GM13976 (cell line): ENCODE measurements at regions of chr11 and their contacts with region 1.

Region 1: DNA sequence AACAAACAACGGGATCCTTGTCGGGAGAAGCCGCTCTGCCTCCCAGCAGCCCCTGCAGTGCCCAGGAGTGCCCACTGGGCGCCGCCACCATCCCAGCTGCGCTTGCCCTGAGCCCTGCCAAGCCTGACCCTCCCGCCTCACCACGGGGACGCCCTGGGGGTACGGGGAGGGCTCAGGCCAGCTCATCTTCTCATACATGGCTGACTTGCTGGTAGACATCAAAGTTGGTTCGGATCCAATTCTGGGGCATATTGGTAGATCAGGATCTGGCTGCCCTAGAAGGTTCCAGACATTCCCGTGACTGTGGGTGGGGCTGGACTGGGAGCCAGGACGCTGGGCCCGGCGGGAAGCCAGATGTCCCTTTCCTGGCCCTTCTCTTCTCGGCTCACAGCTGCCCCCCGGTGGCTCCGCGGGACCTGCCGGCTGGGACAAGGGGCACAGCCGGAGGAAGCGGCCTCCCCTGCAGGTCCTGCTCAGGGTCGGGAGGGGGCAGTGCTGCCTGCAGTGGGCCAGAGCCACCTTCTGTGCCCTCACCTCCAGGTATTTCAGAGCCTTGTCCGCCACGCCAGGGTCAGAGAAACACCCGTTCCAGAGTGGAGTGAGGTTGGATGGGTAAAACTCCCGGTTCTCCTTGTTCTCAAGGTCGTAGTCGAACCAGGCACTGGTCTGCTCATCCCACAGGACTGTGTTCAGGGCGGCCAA is 10.6 kb upstream of the TREH start:
- DNase-seq: peak; percentile 93
- CTCF ChIP-seq: peak; percentile 99

Region 2: DNA sequence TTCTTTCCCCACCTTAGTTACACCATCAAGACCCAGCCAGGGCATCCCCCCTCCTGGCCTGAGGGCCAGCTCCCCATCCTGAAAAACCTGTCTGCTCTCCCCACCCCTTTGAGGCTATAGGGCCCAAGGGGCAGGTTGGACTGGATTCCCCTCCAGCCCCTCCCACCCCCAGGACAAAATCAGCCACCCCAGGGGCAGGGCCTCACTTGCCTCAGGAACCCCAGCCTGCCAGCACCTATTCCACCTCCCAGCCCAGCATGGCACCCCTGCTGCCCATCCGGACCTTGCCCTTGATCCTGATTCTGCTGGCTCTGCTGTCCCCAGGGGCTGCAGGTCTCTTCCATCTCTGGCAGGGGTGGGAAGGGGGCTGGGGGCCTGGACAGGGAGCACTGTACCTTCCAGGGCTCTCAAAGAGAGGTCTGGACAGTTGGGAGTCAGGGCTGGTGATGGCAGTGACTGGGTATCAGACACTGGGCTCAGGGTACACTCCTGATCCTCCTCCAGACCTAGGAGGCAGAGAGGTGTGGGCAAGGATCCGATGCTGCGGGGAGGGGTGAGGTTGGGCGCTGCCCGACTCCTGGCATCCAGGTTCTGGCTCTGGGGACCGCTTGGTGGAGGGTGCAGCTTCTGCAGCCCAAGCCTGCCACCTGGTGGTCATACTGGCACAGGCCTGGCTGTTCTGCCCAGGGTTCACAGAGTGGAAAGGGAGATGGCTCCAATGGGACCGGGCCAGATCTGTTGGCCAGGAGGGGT is 266.3 kb after region 1 on chr11 and contains the start of gene UPK2:
- in situ Hi-C with region 1: loop called (anchors 10 kb)
- DNase-seq: peak; percentile 96
- CTCF ChIP-seq: peak; percentile 98